ENCODE measurements at regions of chr17 and their contacts with region 1.

Region 1: DNA sequence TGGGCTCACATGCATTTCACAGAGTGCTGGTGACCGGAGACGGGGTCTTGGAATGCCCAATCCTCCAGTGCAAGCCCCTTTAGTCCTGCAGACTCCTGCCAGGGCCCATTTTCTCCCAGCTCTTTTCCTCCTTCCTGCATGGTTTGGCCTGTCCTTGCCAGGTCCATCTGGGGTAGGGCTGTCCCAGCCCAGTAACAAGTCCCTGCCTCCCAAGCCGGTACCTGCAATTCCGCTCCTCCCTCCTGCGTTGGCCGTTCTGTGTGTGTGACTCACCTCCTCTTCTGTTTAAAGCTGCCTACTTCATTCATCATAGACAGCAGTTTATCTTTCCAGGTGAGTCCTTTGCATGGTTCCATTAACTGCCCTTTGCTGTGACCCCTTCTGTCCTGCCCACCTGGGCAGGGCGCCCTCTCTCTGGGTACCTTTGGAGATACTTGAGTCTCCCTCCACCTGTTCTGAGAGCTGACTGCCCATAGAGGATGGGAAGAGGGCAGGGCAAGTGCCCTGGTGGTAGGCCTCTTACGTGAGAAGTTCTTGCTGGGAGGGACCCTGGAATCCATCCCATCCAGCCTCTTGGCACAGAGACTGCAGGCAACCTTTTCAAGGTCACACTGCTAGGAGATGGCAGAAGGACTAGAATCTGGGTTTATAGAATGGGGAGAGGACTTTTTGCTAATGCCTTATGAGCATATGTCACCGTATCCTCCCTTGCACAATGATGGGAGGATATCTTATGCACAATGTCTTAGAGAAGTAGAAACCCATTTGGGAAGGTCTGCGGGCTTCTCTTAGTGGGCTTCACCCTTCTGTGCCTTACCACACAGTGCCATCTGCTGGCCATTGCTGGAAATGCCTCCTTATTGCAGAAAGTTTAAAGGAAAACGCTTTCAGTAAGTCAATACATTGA is 29.7 kb upstream of the LGALS9 start:
- DNase-seq: peak; percentile 65 to 90 (median 75)
- H3K4me3 ChIP-seq: no peak overlapping the region
- H3K27ac ChIP-seq: peak overlapping the region in 10 of 59 donors; percentile 7 to 61 (median 31)
- H3K27me3 ChIP-seq: no peaks in the 10 kb centered on the region
- CTCF ChIP-seq: peak; percentile 88 to 99 (median 96)

Region 2: DNA sequence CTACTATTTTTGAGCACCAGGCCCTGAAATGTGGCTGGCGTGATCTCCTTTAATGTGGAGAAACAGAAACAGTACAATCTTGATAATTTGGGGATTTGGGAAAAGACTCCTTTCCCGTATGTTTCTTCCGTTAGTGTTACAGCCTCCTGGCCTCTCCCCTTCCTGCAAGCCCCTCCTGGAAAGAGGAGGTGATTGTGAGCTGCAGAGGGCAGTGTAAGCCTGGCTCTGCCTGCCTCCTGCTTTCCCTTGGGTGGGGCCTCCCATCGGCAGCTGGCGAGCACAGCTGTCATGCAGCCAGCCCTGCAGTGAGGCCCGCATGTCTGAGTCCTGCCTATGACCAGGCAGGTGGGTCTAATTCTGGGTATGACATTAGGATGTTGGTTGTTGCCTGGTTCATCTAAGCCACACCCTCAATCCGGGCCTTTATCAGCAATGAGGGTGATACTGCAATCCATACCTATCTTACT is 356.1 kb before region 1 on chr17:
- intact Hi-C with region 1: loop called in 1 of 2 experiments (anchors 2 kb)
- DNase-seq: peak; percentile 18 to 89 (median 82)
- H3K4me3 ChIP-seq: peak overlapping the region in 21 of 59 donors; percentile 1 to 30 (median 14)
- H3K27ac ChIP-seq: peak overlapping the region; percentile 2 to 92 (median 84)
- H3K27me3 ChIP-seq: no peaks in the 10 kb centered on the region
- CTCF ChIP-seq: peak; percentile 41 to 94 (median 78)

Region 3: GRCh38 chr17:27353461-27354050 is 247.8 kb before region 1 on chr17:
- intact Hi-C with region 1: loop called (anchors 1 kb)
- DNase-seq: peak; percentile 62 to 90 (median 78)
- H3K4me3 ChIP-seq: peak overlapping the region; percentile 51 to 89 (median 73)
- H3K27ac ChIP-seq: peak overlapping the region; percentile 37 to 98 (median 91)
- H3K27me3 ChIP-seq: no peaks in the 10 kb centered on the region
- CTCF ChIP-seq: peak; percentile 38 to 99 (median 87)

Region 4: DNA sequence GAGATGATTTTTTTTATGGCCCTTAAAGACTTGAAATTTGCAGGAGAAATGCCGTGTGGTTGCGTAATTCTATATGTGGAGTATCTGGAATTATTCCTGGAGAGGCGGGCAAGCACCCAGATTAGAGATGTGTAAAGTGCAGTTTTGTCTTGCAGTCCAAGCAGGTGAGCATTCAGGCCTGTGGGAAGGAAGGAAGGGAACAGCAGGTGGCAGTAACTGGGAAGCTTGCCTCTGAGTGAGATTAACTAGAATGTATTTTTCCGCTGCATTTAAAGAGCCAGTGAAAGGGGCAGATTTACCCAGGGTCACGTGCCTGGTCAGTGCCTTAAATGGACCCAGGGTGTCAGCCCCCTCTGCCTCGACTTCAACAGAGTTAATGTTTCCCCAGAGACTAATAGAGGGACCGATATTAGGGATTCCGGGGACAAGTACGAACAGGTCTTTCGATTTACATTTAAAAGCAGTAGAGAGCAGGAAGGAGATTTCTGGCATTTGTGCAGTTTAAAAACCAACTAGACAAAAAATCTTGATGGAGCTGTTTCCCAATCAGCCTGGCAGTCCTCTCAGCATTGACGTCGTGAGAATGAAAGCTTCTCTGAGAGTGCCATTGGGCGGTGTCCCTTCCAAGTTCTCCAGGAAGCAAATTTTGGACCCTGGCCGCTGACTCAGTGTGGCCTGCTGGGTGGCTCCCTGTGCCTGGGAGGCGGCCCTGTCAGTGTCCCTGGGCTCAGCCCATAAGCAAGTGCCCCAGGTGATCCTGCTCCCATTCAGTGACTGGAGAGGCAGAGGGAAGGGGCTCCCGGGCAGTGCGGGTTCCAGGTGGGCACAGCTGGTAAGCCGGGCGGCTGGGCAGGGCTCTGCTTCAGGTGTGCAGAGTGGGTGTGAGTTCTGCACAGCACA is 106.9 kb before region 1 on chr17:
- intact Hi-C with region 1: loop called (anchors 2 kb)
- DNase-seq: peak in 6 of 10 donors; percentile 40 to 68 (median 56)
- H3K4me3 ChIP-seq: peak overlapping the region in 44 of 59 donors; percentile 1 to 56 (median 26)
- H3K27ac ChIP-seq: peak overlapping the region in 58 of 59 donors; percentile 21 to 88 (median 73)
- H3K27me3 ChIP-seq: no peaks in the 10 kb centered on the region
- CTCF ChIP-seq: peak in 53 of 56 donors; percentile 20 to 80 (median 58)

Region 5: DNA sequence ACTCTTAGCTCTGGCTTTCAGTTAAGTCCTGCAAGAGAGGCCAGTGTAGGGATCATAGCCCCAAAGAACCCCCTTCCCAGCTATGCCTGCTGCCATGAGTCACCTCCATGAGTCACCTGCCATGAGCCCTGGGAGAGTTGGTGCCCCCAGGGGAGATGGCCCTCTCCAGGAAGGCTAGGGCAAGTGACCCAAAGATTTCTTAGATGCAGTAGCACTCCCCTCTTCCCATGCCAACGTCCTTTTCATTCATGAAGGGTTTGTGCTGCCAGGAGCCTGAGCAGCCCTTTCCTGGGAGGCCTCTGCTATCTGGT is 48.9 kb before region 1 on chr17:
- intact Hi-C with region 1: no loop called
- DNase-seq: no peak
- H3K4me3 ChIP-seq: no peak overlapping the region
- H3K27ac ChIP-seq: no peak overlapping the region
- H3K27me3 ChIP-seq: no peaks in the 10 kb centered on the region
- CTCF ChIP-seq: no peak

Region 6: DNA sequence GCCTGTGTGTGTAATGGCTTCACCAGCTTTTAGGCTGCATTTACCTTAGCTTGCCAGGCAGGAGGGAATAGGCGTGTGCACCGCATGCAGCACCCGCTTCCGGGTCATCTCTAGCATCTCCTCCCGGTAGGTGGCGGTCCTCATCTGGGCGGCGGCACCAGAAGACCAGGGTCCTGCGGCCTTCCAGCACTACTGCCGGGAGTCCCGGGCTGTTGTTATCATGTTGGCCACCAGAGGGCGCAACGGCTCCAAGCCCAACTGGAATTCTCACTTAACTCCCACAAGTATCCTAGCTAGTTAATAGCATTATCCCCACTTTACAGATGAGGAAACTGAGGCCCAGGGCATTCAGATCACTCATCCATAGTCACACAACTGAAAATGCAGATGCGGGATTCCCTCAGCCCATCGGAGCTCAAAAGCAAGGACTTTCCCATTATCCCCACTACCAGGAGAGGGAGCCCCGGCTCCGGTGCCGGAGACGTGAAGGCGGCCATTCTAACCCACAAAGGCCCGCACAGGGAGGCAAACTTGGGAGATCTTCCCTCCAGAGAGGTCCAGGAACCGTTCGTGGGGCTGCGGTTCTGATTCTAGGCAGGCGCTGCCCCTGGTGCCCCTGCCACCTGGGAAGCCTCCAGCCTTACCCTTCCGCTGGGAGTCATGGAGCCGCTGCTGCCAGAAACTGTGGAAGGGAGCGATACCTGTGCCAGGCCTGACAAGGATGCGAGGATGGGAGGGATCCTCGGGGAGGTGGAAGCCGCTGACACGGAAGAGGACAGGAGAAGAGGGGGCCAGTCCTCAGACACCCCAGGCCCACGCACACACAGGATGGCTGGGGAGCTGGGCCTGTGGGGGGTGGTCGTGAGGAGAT is 53.6 kb after region 1 on chr17:
- intact Hi-C with region 1: loop called (anchors 2 kb)
- DNase-seq: peak; percentile 60 to 82 (median 68)
- H3K4me3 ChIP-seq: no peak overlapping the region
- H3K27ac ChIP-seq: no peak overlapping the region
- H3K27me3 ChIP-seq: no peaks in the 10 kb centered on the region
- CTCF ChIP-seq: peak; percentile 76 to 98 (median 94)

Region 7: GRCh38 chr17:27690882-27691281 is 89.6 kb after region 1 on chr17:
- intact Hi-C with region 1: no loop called
- DNase-seq: no peak
- H3K4me3 ChIP-seq: no peak overlapping the region
- H3K27ac ChIP-seq: no peak overlapping the region
- H3K27me3 ChIP-seq: no peaks in the 10 kb centered on the region
- CTCF ChIP-seq: no peak

Region 8: GRCh38 chr17:27701963-27702362 is 100.6 kb after region 1 on chr17:
- intact Hi-C with region 1: no loop called
- DNase-seq: no peak
- H3K4me3 ChIP-seq: no peak overlapping the region
- H3K27ac ChIP-seq: no peak overlapping the region
- H3K27me3 ChIP-seq: peaks cover 0 to 5% (median 0%) of the 10 kb centered on the region in 45 donors
- CTCF ChIP-seq: no peak

Measured in dorsolateral prefrontal cortex (tissue), 120 donors.